ACHN (cell line): ENCODE measurements at regions of chr4 and their contacts with region 1.

Region 1: DNA sequence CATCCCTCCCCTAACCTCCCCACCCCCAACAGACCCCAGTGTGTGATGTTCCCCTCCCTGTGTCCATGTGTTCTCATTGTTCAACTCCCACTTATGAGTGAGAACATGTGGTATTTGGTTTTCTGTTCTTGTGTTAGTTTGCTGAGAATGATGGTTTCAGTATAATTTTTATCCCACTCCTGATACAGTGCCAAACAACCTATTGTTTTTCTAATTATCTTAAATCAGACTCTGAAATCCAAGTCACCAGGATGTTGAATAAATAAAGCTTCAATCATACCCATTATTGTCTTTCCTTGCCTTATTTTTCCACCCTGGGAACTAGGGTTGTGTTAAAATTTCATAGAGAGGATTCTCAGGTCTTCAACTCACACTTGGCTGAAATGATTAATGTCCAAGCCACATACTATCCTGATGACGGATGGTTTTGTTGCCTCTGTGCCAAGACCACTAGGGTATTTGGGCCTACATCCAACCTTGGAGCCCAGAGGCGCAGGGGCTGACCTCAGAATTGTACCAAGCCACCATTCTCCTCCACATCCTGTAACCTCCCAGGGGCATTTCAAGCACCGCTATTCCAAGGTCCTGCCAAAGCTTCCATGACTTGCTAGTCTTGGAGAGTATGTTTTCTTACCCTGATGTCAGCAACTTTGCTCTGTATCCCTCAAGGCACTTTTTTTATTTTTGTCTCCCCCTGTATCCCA is 332.4 kb downstream of the ARHGAP24 start:
- DNase-seq: peak; percentile 95

Region 2: GRCh38 chr4:85402371-85402770 is 405.0 kb before region 1 on chr4:
- in situ Hi-C with region 1: no loop called
- DNase-seq: no peak

Region 3: DNA sequence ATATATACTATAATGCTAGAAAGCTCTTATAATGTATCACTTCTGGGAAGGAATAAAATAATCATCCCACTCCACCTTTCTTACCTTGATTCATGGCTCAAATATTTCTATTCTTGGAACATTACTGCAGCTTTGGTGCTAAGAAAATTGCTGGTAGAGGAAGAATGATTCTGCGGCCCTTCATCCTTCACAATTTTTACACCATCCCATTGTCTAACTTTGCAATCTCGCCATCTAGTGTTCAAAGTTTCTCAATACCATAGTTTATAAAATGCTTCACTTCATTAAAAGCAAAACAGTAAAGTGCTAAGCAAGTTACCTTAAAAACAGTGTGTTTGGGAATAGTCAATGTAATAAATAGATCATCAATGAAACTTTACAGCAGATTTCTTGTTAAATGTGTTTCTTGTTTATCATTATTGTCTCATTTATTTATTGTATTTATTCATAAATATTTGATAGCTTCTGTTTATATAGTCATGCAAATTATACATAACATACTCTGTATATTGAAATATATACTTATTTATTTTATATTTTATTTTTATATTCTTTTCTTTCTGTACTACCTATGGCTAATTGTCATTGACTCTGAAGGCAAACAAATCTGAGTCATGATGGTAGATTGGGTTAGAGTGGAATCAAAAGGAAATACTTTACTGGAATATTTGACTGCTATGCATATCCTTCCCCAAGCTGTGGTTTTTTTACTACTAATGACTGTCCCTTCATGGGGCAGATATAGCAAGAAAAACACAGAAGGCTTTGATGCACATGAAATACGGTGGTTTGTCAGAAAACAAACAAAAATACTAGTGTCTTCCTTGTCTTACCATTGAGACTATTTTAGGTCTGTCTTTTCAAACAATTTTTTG is 161.8 kb after region 1 on chr4:
- in situ Hi-C with region 1: loop called (anchors 25 kb)
- DNase-seq: peak; percentile 76

Region 4: DNA sequence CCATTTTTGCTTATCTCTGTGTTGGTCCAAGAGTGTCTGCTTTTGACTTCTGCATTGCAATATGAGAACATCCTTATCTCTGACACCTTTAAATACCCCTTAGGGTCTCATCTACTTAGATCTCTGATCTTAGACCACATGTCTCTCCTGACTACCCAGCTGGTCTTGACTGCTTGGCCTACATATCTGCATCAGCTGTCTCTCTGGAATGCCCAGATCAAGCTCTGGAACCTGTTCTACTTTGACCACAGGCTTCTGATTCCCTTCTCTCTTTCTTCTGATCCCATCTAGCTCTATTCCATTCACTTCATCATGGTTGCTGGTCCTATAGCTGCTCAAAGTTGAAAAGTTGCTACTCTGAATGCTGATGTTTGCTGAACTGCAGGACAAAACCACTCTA is 251.2 kb after region 1 on chr4:
- in situ Hi-C with region 1: no loop called
- DNase-seq: no peak